PC-9 (cell line): ENCODE measurements at regions of chr7 and their contacts with region 1.

Region 1: DNA sequence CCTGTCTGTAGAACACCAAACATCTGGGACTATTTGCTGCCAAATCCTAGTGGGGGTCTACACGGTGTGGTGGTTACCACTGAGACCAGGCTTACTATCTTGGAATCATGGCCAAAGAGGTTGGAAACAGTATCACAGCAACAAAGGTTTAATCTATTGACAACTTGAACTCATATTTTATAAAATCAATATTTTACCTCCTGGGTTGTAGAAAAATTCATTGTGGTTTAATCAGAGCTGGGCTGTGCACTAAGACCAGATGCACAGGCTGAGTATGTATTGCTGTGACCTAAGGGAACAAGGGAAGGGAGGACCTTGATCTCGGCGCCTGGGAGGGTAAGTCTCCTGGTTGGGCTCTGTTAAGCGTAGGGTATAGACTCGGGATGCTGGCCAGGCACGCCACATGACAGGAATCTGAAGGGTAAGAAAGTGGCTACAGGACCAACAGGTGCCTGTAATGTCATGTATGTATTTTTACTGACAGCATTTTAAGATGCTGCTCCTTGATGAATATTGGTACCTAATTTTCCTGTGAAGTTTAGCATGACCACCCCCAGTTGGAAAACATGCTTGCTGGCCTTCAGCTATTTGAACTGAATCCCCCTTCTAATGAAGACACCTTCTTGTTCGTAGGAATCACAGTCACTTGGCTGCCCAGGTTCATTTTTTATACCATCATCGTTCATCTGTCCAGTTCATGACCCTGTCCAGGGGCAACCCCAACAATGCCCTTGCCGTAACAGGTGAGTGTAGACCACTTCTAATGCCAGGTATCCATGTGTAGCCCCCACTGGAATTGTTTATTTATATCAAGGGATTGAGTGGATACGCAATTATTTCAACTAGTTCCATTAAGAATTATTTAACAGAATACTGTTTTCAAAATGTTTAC is 79.5 kb downstream of the EZH2 start:
- DNase-seq: no peak
- H3K4me3 ChIP-seq: no peak overlapping the region
- H3K27ac ChIP-seq: no peak overlapping the region
- H3K4me1 ChIP-seq: no peaks in the 10 kb centered on the region
- H3K27me3 ChIP-seq: no peaks in the 10 kb centered on the region
- CTCF ChIP-seq: no peak

Region 2: GRCh38 chr7:148633761-148634160 is 170.8 kb before region 1 on chr7:
- CTCF ChIA-PET with region 1: no interaction called
- POLR2A ChIA-PET with region 1: no interaction called
- intact Hi-C with region 1: no loop called
- DNase-seq: no peak
- H3K4me3 ChIP-seq: no peak overlapping the region
- H3K27ac ChIP-seq: no peak overlapping the region
- H3K4me1 ChIP-seq: no peaks in the 10 kb centered on the region
- H3K27me3 ChIP-seq: 0 out of 2 replicates have a peak, but pooled peaks cover 3% of the 10 kb centered on the region
- CTCF ChIP-seq: no peak

Region 3: GRCh38 chr7:148712678-148713329 is 91.8 kb before region 1 on chr7:
- CTCF ChIA-PET with region 1: interaction called, 12 read pairs
- POLR2A ChIA-PET with region 1: no interaction called
- intact Hi-C with region 1: no loop called
- DNase-seq: no peak
- H3K4me3 ChIP-seq: no peak overlapping the region
- H3K27ac ChIP-seq: 0 out of 2 replicates have a peak overlapping the region, but pooled peaks have one; percentile 0
- H3K4me1 ChIP-seq: peaks cover 33% of the 10 kb centered on the region
- H3K27me3 ChIP-seq: no peaks in the 10 kb centered on the region
- CTCF ChIP-seq: no peak

Region 4: GRCh38 chr7:148787571-148788295 is 16.9 kb before region 1 on chr7:
- CTCF ChIA-PET with region 1: no interaction called
- POLR2A ChIA-PET with region 1: interaction called, 14 read pairs
- intact Hi-C with region 1: no loop called
- DNase-seq: no peak
- H3K4me3 ChIP-seq: no peak overlapping the region
- H3K27ac ChIP-seq: no peak overlapping the region
- H3K4me1 ChIP-seq: no peaks in the 10 kb centered on the region
- H3K27me3 ChIP-seq: no peaks in the 10 kb centered on the region
- CTCF ChIP-seq: no peak

Region 5: GRCh38 chr7:149229526-149229925 is 424.9 kb after region 1 on chr7:
- CTCF ChIA-PET with region 1: no interaction called
- POLR2A ChIA-PET with region 1: no interaction called
- intact Hi-C with region 1: no loop called
- DNase-seq: no peak
- H3K4me3 ChIP-seq: no peak overlapping the region
- H3K27ac ChIP-seq: no peak overlapping the region
- H3K4me1 ChIP-seq: peaks cover 38% of the 10 kb centered on the region
- H3K27me3 ChIP-seq: no peaks in the 10 kb centered on the region
- CTCF ChIP-seq: no peak